MCF 10A (cell line): ENCODE measurements at regions of chr3 and their contacts with region 1.

Region 1: GRCh38 chr3:159884661-159885402 is 103.8 kb upstream of the IL12A start:
- DNase-seq: peak; percentile 46
- H3K4me3 Mint-ChIP-seq: no peak overlapping the region
- H3K27ac Mint-ChIP-seq: peak overlapping the region; percentile 31
- H3K4me1 Mint-ChIP-seq: peaks cover 26% of the 10 kb centered on the region
- H3K27me3 Mint-ChIP-seq: no peaks in the 10 kb centered on the region
- CTCF ChIP-seq: peak; percentile 65

Region 2: DNA sequence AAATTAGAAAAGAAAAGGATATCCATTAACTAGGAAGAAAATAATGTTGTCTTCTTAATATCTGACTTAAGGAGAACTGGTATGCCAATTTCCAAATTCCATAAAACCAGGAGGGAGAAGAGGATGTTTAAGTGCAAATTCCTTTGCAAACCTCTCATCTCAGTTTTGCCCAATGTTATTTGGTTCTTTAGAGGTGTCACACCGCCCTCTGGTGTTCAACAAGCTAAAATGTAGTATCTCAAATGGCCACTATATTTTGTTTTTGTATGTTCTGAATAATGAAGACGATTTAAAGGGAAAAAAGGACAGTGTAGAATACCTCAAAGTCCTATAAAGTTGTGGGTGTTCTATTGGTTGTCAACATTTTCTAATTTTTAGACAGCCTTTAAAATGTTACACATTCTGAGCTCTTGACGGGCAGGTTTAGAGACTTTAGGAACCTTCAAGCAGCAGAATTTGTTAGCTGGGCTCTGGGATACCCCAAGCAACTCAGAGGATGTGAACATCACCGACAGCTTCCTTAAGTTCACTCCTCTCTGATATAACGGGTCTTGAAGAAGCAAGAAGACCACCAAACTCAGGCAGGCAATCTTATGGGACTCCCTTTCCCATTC is 624.7 kb before region 1 on chr3:
- CTCF ChIA-PET with region 1: interaction called, 13 read pairs
- POLR2A ChIA-PET with region 1: interaction called, 3 read pairs
- intact Hi-C with region 1: loop called (anchors 5 kb)
- DNase-seq: peak; percentile 77
- H3K4me3 Mint-ChIP-seq: no peak overlapping the region
- H3K27ac Mint-ChIP-seq: no peak overlapping the region
- H3K4me1 Mint-ChIP-seq: no peaks in the 10 kb centered on the region
- H3K27me3 Mint-ChIP-seq: peaks cover 49% of the 10 kb centered on the region
- CTCF ChIP-seq: peak; percentile 81

Region 3: GRCh38 chr3:159804726-159805410 is 80.0 kb before region 1 on chr3:
- CTCF ChIA-PET with region 1: interaction called, 51 read pairs
- POLR2A ChIA-PET with region 1: interaction called, 5 read pairs
- intact Hi-C with region 1: no loop called
- DNase-seq: peak; percentile 93
- H3K4me3 Mint-ChIP-seq: no peak overlapping the region
- H3K27ac Mint-ChIP-seq: no peak overlapping the region
- H3K4me1 Mint-ChIP-seq: peaks cover 32% of the 10 kb centered on the region
- H3K27me3 Mint-ChIP-seq: no peaks in the 10 kb centered on the region
- CTCF ChIP-seq: peak; percentile 91

Region 4: DNA sequence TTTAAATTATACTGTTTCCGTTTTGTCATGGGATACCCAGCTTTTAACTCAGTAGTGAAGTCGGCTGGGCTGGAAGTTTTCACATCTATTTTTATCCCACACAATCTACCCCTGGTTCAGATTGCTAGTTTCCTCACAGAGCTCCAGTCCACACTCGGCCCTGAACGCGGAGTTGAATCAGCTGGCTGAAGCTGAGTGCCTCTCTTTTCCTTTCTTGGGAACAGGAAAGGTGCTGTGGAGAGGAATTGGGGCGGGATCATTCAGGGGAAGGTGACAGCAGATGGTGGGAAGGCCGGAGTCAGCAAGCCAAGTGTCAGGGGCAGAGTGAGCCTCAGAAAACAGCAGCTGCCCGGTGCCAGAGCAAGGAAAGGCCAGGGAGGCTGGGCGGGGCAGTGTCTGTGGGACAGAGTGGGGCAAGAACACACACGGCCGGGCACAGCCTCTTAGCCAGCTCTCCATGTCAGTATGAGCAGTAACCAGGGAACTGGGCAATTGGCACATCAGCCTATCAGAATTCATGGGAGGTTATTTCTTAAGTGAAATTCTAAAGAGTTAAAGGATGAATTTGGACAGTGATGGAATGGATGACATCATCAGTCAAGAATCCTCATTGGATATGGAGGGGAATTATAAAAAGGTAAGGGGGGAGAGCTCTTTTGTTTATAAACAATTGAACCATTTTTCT is 31.9 kb before region 1 on chr3:
- CTCF ChIA-PET with region 1: interaction called, 24 read pairs
- POLR2A ChIA-PET with region 1: interaction called, 8 read pairs
- intact Hi-C with region 1: no loop called
- DNase-seq: peak; percentile 57
- H3K4me3 Mint-ChIP-seq: peak overlapping the region; percentile 66
- H3K27ac Mint-ChIP-seq: peak overlapping the region; percentile 92
- H3K4me1 Mint-ChIP-seq: peaks cover 38% of the 10 kb centered on the region
- H3K27me3 Mint-ChIP-seq: no peaks in the 10 kb centered on the region
- CTCF ChIP-seq: no peak

Region 5: GRCh38 chr3:159902546-159903314 is 17.9 kb after region 1 on chr3:
- CTCF ChIA-PET with region 1: interaction called, 34 read pairs
- POLR2A ChIA-PET with region 1: interaction called, 3 read pairs
- intact Hi-C with region 1: no loop called
- DNase-seq: no peak
- H3K4me3 Mint-ChIP-seq: no peak overlapping the region
- H3K27ac Mint-ChIP-seq: no peak overlapping the region
- H3K4me1 Mint-ChIP-seq: no peaks in the 10 kb centered on the region
- H3K27me3 Mint-ChIP-seq: no peaks in the 10 kb centered on the region
- CTCF ChIP-seq: no peak

Region 6: DNA sequence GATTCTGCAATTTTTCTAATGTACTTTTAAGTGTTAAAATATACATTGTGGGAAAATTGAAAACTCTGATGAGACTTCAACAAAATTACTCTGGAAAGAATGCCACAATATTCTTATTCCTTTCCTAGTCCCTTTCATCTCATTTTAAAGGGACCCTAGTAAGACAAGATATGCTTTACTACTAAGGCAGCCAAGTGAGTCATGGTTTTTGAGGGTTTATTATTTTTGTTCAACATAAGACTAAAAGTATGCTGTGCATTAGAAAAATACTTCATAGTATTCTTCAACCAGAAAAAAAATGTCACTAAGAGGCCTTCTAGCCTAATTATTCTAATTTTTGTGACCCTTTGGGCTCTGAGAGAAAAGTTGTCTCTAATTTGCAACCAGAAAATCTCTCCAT is 111.2 kb after region 1 on chr3:
- CTCF ChIA-PET with region 1: interaction called, 102 read pairs
- POLR2A ChIA-PET with region 1: no interaction called
- intact Hi-C with region 1: no loop called
- DNase-seq: no peak
- H3K4me3 Mint-ChIP-seq: no peak overlapping the region
- H3K27ac Mint-ChIP-seq: no peak overlapping the region
- H3K4me1 Mint-ChIP-seq: peaks cover 6% of the 10 kb centered on the region
- H3K27me3 Mint-ChIP-seq: no peaks in the 10 kb centered on the region
- CTCF ChIP-seq: no peak

Region 7: DNA sequence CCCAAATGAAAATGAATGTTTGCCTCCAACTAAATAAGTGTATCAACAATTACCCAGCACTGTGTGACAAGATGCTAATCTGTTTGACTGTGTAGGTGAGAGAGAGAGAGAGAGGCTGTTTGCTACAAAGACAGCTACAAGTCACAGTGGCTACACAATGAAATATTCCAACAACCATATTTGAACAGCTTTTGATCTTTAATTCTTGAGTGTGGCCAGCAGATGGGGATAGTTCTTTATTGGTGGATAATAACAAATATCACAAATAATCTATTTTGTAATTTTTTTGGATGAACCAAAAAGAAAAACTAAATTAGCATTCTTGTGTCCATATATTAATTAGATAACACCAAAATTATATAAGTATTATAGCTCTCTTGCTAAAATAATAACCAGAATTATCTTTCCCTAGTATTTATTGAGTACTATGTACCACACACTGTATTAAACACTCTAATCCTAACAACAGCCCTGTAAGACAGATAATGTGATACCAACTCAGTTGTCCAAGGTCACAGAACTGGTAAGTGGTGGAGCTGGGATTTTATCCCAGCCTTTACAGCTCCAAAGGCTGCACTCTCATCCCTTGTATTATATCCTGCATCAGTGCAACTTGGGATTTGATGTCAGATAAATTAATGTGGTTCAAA is 278.5 kb after region 1 on chr3:
- CTCF ChIA-PET with region 1: interaction called, 11 read pairs
- POLR2A ChIA-PET with region 1: no interaction called
- intact Hi-C with region 1: no loop called
- DNase-seq: peak; percentile 37
- H3K4me3 Mint-ChIP-seq: no peak overlapping the region
- H3K27ac Mint-ChIP-seq: no peak overlapping the region
- H3K4me1 Mint-ChIP-seq: peaks cover 4% of the 10 kb centered on the region
- H3K27me3 Mint-ChIP-seq: no peaks in the 10 kb centered on the region
- CTCF ChIP-seq: peak; percentile 39